ENCODE measurements at regions of chr10 and their contacts with region 1.

Region 1: DNA sequence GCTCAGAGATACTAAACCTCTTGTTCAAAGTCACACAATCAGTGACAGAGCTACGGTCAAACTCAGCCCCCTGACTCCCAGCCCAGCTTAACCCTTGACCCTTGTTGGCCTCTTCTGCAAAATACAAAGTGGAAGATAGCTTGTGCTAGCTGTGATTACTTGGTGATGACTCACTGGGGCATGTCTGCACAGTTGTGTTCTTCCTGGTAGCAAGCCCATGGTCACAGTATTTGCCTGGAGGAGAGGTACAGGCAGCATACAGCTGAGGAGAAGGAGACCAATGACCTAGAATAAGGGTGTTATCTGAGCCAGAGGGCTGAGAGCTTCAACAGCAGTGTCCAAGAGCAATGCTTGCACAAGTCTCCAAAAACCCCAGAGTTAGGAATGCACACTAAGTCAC is 5.7 kb upstream of the HSPA12A start:
- DNase-seq: no peak
- H3K4me3 ChIP-seq: no peak overlapping the region
- H3K27ac ChIP-seq: no peak overlapping the region
- H3K4me1 ChIP-seq: no peaks in the 10 kb centered on the region
- H3K27me3 ChIP-seq: no peaks in the 10 kb centered on the region
- CTCF ChIP-seq: no peak
- POLR2A ChIP-seq: no peak

Region 2: DNA sequence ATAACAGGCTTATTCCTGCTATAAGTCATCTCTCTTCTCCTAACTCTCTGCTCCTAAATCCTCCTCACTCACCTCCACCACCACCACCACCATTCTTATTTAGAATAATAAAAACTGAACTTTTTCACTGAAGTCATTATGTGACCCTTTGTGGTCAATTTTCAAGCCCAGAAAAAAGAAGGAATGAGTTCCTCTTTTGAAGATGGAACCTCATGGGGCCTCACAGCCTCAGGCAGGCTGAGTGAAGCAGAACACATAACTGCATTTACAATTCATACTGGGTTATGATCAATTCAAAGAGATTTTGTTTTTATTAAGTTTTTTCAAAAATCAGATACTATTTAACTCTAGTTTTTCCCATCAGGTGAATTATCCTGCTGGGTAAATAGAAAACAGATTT is 290.6 kb before region 1 on chr10:
- intact Hi-C with region 1: loop called (anchors 5 kb)
- DNase-seq: no peak
- H3K4me3 ChIP-seq: no peak overlapping the region
- H3K27ac ChIP-seq: no peak overlapping the region
- H3K4me1 ChIP-seq: no peaks in the 10 kb centered on the region
- H3K27me3 ChIP-seq: no peaks in the 10 kb centered on the region
- CTCF ChIP-seq: no peak
- POLR2A ChIP-seq: no peak